ENCODE measurements at regions of chr12 and their contacts with region 1.

Region 1: GRCh38 chr12:46372544-46373110 is at the start of gene SLC38A2:
- DNase-seq: peak; percentile 95
- H3K4me3 Mint-ChIP-seq: peak within 1 kb of the TSS; percentile 92
- H3K27ac Mint-ChIP-seq: peak within 1 kb of the TSS; percentile 95
- H3K4me1 Mint-ChIP-seq: peaks cover 52% of the 10 kb centered on the region
- H3K27me3 Mint-ChIP-seq: no peaks in the 10 kb centered on the region
- total RNA-seq, gene SLC38A2: 141 and 143 TPM in 2 replicates

Region 2: DNA sequence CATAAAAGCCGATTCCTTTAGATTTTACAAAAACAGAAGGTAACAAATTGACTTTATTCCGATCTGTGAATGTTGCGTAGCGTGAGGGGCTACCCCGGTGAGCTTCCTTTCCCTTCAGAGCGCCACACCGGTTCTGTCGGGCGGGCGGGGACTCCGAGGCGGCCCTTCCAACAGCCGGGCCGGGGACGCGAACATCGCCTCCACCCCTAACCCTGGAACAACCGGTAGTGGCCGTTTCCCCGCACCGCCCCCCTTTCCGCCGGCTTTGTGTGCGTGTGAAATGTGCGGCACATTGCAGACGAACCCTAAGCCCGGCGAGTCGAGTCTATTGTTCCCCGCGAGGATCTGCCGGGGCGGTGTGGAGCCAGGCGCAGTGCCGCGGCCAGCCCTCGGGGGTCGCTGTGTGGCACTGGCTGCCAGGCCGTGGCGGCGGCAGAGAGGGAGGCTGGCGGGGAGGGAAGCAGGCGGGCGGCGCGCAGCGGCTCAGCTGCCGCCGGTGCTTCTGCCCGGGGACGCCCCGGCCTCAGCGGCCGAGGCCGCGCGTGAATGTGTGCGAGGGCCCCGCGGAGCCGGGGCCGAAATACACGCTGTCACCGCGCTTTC is 643.9 kb before region 1 on chr12:
- intact Hi-C with region 1: loop called (anchors 5 kb)
- DNase-seq: peak; percentile 96
- H3K4me3 Mint-ChIP-seq: peak overlapping the region; percentile 100
- H3K27ac Mint-ChIP-seq: peak overlapping the region; percentile 100
- H3K4me1 Mint-ChIP-seq: peaks cover 31% of the 10 kb centered on the region
- H3K27me3 Mint-ChIP-seq: no peaks in the 10 kb centered on the region

Region 3: GRCh38 chr12:46179683-46180452 is 192.8 kb before region 1 on chr12:
- intact Hi-C with region 1: no loop called
- DNase-seq: no peak
- H3K4me3 Mint-ChIP-seq: no peak overlapping the region
- H3K27ac Mint-ChIP-seq: no peak overlapping the region
- H3K4me1 Mint-ChIP-seq: peaks cover 19% of the 10 kb centered on the region
- H3K27me3 Mint-ChIP-seq: no peaks in the 10 kb centered on the region

Region 4: GRCh38 chr12:46268590-46269558 is 103.8 kb before region 1 on chr12 and contains the start of gene SLC38A1:
- intact Hi-C with region 1: loop called (anchors 1 kb)
- DNase-seq: peak; percentile 86
- H3K4me3 Mint-ChIP-seq: no peak within 1 kb of the TSS
- H3K27ac Mint-ChIP-seq: no peak within 1 kb of the TSS
- H3K4me1 Mint-ChIP-seq: peaks cover 26% of the 10 kb centered on the region
- H3K27me3 Mint-ChIP-seq: no peaks in the 10 kb centered on the region
- total RNA-seq, gene SLC38A1: 152 and 154 TPM in 2 replicates

Region 5: DNA sequence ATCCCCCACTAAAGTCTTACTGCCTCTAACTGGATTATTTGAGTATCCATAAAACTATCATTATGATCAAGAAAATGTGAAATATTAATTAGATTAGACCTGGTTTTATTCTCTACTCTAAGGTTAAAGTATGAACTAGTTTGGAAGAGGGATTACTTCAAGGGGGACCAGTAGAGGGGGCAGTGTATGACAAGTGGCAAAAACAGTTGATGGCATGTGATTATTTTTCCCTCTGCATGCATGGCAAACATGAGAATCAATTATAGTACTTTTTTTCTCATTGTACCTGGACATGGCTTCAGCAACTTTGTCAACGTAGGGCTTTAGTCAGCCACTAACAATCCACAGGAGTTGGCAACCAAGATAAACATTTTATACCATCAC is 144.9 kb after region 1 on chr12:
- intact Hi-C with region 1: loop called (anchors 2 kb)
- DNase-seq: no peak
- H3K4me3 Mint-ChIP-seq: peak overlapping the region; percentile 45
- H3K27ac Mint-ChIP-seq: peak overlapping the region; percentile 93
- H3K4me1 Mint-ChIP-seq: peaks cover 77% of the 10 kb centered on the region
- H3K27me3 Mint-ChIP-seq: no peaks in the 10 kb centered on the region

Region 6: GRCh38 chr12:46661110-46661845 is 288.7 kb after region 1 on chr12:
- intact Hi-C with region 1: loop called (anchors 2 kb)
- DNase-seq: no peak
- H3K4me3 Mint-ChIP-seq: no peak overlapping the region
- H3K27ac Mint-ChIP-seq: peak overlapping the region; percentile 58
- H3K4me1 Mint-ChIP-seq: peaks cover 44% of the 10 kb centered on the region
- H3K27me3 Mint-ChIP-seq: no peaks in the 10 kb centered on the region

Region 7: DNA sequence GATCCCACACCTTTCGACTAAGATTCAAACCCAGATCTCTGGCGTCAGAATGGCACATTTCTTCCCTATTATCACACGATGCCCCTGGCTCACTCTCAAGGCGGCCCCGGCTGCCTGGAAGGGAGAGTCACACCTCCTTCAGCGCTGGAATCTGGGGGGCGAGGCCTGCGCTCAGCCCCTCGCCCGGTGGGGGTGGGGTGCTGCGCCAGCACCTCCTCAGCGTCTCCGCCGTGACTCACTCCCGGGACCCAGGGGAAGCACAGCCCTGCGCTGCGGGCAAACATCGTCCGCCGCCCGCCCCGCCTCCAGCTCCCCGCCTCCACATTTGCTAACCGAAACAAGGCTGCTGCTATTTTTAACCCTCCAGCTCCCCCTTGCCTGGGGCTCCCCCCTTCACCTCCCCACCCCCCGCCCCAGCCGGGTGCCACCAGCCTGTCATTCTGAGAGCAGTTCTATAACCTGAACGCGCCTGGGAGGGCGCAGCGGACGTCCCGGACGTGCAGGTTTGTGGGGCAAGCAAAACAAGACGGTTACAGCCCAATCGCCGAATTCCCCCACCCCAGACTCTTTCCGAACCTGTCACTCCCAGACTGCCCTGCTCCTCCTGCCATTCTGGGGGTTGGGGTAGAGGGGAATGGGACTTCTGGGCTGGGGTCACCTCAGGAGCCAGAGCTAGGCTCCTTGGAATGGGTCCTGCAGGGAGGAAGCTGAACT is 1440.3 kb after region 1 on chr12:
- intact Hi-C with region 1: loop called (anchors 10 kb)
- DNase-seq: peak; percentile 86
- H3K4me3 Mint-ChIP-seq: peak overlapping the region; percentile 95
- H3K27ac Mint-ChIP-seq: peak overlapping the region; percentile 100
- H3K4me1 Mint-ChIP-seq: peaks cover 75% of the 10 kb centered on the region
- H3K27me3 Mint-ChIP-seq: no peaks in the 10 kb centered on the region